Common myeloid progenitor, CD34-positive (primary cell): ENCODE measurements at regions of chr1 and their contacts with region 1.

Region 1: DNA sequence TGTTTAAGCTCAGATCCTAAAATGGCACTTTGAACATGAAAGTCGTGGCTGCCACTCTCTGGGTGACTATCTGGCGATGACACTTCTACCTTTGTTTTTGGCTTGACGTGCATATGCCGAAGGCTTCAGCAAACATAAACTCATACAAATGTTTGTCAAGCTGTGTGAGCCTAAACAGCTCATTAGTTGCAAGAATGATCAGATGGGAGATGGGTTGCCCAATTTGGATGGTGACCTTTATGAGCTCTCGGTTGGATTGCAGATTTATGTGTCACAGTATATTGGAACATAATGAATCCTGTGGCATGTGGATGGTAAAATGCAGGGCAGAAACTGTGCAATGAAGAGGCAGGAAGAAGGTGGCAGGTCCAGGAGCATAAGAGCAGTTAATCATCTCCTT is 229.3 kb downstream of the DISC1 start:
- DNase-seq: no peak
- H3K4me3 ChIP-seq: no peak overlapping the region
- H3K27ac ChIP-seq: no peak overlapping the region
- H3K4me1 ChIP-seq: peaks cover 0 to 4% (median 0%) of the 10 kb centered on the region in 4 experiments
- H3K27me3 ChIP-seq: no peaks in the 10 kb centered on the region

Region 2: DNA sequence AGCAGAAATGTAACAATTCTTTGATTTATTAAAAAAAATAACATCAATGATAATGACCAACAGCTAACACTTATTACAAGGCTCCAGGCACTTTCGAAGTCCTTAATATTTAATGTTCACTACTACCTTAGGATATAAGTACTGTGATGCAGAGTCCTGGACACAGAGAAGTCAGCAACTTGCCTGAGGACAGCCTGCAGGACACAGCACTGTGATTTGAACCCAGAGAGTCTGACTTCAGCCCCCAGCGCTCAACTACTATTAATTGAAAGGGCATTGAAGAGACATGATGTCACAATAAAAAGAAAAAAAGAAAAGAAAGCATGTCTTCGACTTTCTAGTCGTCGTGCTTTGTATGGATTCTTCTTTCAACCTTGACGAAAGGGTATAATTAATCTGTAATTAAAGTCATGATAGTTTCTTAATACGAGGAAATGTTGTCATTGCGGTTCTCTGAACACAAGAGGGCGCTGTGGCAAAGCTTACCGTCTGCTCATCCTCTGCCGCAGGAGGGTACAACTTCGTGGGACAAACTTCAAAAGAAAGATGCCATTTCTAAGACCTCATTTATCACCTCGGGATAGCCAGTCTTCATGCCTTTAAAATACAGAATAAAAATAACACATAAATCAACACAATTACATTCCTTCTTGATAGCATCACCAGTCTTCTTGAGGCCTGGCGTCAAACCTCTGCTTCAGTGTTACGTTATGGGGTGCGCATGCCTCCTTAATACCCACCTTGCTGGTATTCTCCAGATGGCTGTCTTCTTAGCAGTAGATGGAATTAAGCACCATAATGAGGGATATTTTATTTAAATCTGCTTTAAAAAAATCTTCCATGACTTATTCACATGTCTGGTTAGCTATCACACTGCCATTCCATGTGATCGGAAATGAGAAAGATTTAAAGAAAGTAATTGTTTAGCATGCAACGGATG is 10.7 kb after region 1 on chr1:
- CTCF ChIA-PET with region 1: interaction called, 11 read pairs
- POLR2A ChIA-PET with region 1: no interaction called
- DNase-seq: peak; percentile 47 to 72 (median 69)
- H3K4me3 ChIP-seq: no peak overlapping the region
- H3K27ac ChIP-seq: no peak overlapping the region
- H3K4me1 ChIP-seq: peaks cover 0 to 14% (median 2%) of the 10 kb centered on the region in 4 experiments
- H3K27me3 ChIP-seq: no peaks in the 10 kb centered on the region

Region 3: DNA sequence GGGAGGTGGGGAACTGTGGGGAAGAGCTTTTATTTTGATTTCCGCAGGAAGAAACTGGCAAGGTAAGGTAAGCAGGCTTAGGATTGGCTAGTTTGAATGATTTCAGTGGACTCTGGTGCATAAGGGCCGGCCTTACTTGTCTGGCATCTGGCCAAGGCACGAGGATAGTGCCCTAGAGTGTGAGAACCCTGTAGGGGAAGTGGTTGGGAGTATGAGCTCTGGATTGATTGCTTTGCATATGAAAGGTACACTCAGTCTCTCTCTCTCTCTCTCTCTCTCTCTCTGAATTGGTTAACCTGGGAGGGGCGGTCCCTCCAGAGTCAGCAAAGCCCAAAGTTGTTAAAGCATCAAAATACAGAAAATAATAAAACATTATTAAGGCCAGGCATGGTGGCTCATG is 311.0 kb after region 1 on chr1:
- CTCF ChIA-PET with region 1: no interaction called
- POLR2A ChIA-PET with region 1: no interaction called
- DNase-seq: no peak
- H3K4me3 ChIP-seq: no peak overlapping the region
- H3K27ac ChIP-seq: no peak overlapping the region
- H3K4me1 ChIP-seq: no peaks in the 10 kb centered on the region
- H3K27me3 ChIP-seq: no peaks in the 10 kb centered on the region